GM13976 (cell line): ENCODE measurements at regions of chr12 and their contacts with region 1.

Region 1: DNA sequence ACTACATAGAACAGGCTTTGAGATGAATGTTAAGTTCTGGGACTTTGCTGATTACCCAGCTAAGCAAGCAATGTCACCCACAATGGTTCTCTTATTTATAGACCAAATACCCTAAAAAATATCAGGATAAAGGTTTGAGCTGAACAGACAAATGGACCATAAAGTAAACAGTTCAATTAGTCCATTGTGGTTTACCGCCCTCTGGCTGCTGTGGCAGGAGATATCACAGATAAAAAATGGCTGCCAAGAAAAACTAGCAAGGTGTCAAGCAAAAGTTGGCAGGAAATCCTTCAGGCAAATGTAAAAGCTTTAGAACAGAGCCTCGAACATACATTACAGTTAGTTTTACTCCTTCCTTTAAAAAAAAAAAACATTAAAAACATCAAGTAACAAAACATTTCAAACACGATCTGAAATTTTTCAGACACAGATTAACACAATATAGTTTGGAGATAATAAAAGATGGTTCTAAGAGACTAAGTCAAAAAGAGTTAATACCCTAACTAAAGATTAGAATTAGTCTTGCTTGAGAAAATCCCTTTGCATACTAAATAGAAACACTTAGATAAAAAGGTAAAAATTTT is 41.3 kb downstream of the MED13L start:
- DNase-seq: peak; percentile 52
- CTCF ChIP-seq: peak; percentile 81

Region 2: GRCh38 chr12:116015525-116015924 is 220.7 kb before region 1 on chr12:
- in situ Hi-C with region 1: loop called (anchors 10 kb)
- DNase-seq: peak; percentile 24
- CTCF ChIP-seq: no peak